Aorta (tissue), 5 donors: ENCODE measurements at regions of chr20 and their contacts with region 1.

Region 1: GRCh38 chr20:51306503-51307358 is 235.8 kb downstream of the NFATC2 start:
- DNase-seq: peak; percentile 74 to 91
- ATAC-seq: peak; percentile 84
- H3K4me3 ChIP-seq: no peak overlapping the region
- H3K27ac ChIP-seq: no peak overlapping the region
- H3K4me1 ChIP-seq: no peaks in the 10 kb centered on the region
- H3K27me3 ChIP-seq: no peaks in the 10 kb centered on the region

Region 2: DNA sequence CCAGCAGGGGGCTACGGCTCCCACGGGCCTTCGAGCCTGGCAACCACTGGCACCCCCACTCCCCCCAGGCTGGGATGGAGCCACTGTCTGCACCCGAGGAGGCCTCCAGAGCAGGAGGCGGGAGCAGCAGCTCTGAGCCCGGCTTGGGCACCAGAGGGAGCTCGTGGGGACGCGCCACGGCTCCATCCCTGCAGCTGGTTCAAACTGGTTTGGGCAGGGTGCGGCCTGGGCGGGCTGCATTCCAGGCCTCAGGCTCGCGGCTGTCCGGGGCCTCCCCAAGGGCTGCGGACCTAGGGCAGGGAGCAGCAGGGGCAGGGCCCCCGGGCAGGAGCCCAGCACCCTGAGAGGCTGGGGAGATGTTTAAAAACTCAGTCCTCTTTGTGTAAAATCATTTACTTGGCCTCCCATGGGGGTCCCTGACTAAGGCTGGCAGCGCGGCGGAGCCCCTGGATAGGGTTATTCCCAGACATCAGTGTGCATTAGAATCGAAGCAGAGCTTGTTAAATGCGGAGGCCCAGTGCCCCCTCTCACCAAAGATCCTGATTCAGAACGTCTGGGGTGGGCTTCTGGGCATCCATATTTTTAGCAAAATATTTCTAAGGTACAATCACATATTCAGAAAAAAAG is 516.0 kb before region 1 on chr20:
- intact Hi-C with region 1: loop called in 1 of 2 experiments (anchors 10 kb)
- DNase-seq: peak; percentile 95
- ATAC-seq: peak; percentile 92
- H3K4me3 ChIP-seq: no peak overlapping the region
- H3K27ac ChIP-seq: peak overlapping the region; percentile 34 to 62
- H3K4me1 ChIP-seq: no peaks in the 10 kb centered on the region
- H3K27me3 ChIP-seq: no peaks in the 10 kb centered on the region

Region 3: DNA sequence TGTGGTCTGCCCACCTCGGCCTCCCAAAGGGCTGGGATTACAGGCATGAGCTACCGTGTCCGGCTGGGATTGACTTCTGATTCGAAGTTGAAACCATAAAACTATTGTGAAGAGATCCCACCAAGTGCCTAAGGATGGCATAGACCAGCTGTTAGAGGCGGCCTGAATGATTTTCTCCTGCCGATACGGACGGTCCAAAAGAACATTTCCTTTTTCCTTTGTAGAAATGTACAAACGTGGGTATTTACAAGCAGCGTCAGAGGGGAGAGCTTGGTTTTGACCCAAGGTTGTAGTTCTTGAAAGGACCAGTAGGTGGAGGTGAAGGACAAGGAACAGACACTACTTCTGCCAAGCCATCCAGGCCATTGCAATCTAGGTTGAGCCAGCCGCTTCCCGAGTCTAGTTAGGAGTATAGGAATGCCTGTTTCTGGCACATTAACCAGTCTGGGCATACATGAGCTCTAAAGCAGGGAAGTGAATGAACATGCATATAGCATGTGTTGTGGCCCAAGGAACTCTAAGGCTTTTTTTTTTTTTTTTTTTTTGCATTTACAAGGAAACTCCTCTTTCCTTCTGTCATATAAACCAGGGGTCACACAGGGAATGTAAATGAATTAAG is 319.0 kb before region 1 on chr20:
- intact Hi-C with region 1: loop called (anchors 2 kb)
- DNase-seq: peak in 1 of 2 donors; percentile 60
- ATAC-seq: peak; percentile 90
- H3K4me3 ChIP-seq: no peak overlapping the region
- H3K27ac ChIP-seq: no peak overlapping the region
- H3K4me1 ChIP-seq: no peaks in the 10 kb centered on the region
- H3K27me3 ChIP-seq: no peaks in the 10 kb centered on the region

Region 4: DNA sequence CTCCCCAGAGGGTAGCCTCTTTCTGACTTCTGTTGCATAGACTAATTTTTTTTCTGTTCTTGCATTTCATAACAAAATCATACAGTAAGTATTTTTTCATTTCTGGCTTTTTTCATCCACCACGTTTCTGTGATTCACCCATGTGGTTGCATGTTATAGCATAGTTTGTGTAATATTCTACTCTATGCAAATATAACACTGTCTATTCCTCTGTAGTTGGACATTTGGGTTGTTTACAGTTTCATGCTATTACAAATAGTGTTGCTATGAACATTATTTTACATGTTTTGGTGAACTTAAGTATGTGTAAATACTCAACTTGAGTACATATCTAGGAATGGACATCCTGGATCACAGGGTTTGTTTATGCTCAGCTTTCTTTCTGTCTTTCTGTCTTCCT is 96.6 kb before region 1 on chr20:
- intact Hi-C with region 1: no loop called
- DNase-seq: no peak
- ATAC-seq: no peak
- H3K4me3 ChIP-seq: no peak overlapping the region
- H3K27ac ChIP-seq: no peak overlapping the region
- H3K4me1 ChIP-seq: no peaks in the 10 kb centered on the region
- H3K27me3 ChIP-seq: no peaks in the 10 kb centered on the region

Region 5: DNA sequence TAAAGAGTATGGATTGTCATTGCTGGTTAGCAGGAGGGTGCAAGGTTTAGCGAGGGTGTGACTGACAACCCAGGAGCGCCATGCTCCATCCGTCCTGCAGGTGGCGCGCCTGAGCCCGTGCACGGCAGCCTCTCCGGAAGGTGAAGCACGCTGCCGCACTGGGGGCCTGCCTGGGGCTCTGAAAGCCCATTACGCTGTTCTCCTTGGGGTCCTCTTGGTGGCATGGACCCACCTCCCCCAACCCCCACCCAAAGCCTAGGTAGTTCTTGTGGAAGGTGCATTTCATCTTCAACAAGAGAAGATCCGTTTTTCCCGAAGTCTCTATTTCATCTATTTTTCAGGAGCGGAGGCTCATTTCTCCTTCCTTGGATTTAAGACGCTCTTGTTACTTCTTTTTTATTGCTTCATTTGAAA is 86.4 kb before region 1 on chr20:
- intact Hi-C with region 1: loop called in 1 of 2 experiments (anchors 5 kb)
- DNase-seq: peak in 1 of 2 donors; percentile 78
- ATAC-seq: no peak
- H3K4me3 ChIP-seq: no peak overlapping the region
- H3K27ac ChIP-seq: no peak overlapping the region
- H3K4me1 ChIP-seq: no peaks in the 10 kb centered on the region
- H3K27me3 ChIP-seq: no peaks in the 10 kb centered on the region